Esophagus squamous epithelium (tissue), 5 donors: ENCODE measurements at regions of chr6 and their contacts with region 1.

Region 1: GRCh38 chr6:119360262-119360915 is 10.8 kb upstream of the MAN1A1 start:
- DNase-seq: no peak
- H3K4me3 ChIP-seq: no peak overlapping the region
- H3K27ac ChIP-seq: no peak overlapping the region
- H3K4me1 ChIP-seq: no peaks in the 10 kb centered on the region
- H3K27me3 ChIP-seq: no peaks in the 10 kb centered on the region
- CTCF ChIP-seq: no peak
- POLR2A ChIP-seq: no peak

Region 2: DNA sequence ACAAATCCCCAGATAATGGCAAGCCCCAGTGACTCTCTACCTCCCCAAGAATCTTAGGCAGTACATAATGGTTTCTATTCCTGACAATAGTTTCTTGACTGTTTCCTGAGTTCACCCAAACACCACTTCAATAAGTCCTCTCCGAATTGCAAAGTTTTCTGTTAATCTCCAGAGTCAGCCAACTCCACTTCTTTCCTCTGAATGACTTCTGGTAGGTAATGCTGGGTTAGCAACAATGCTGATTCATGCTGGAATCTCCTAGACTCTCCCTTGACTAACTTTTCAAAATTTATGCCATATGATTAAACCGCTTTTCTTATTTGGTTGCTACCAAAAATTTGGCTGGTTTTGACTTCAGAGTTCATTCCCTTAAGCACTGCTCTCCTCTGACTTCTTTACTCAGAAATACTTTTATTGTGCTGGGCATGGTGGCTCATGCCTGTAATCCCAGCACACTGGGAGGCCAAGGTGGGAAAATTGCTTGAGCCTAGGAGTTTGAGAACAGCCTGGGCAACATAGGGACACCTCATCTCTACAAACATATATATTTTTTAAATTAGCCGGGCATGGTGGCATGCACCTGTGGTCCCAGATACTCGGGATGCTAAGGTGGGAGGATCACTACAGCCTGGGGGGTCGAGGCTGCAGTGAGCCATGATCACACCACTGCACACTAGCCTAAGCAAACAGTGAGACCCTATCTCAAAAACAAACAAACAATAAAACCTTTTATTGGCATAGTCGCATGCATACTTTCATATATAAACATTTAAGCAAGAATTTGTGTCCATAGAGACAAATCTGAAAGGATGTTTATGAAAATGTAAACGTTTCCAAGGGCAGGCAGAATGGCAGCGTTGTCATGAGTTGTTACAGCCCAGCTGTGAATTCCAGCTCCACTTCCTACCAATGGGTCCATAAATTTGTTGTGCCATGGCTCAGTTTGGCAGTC is 1061.6 kb before region 1 on chr6:
- intact Hi-C with region 1: no loop called
- DNase-seq: no peak
- H3K4me3 ChIP-seq: no peak overlapping the region
- H3K27ac ChIP-seq: no peak overlapping the region
- H3K4me1 ChIP-seq: no peaks in the 10 kb centered on the region
- H3K27me3 ChIP-seq: no peaks in the 10 kb centered on the region
- CTCF ChIP-seq: no peak
- POLR2A ChIP-seq: no peak

Region 3: GRCh38 chr6:118697554-118697953 is 662.8 kb before region 1 on chr6:
- intact Hi-C with region 1: no loop called
- DNase-seq: no peak
- H3K4me3 ChIP-seq: no peak overlapping the region
- H3K27ac ChIP-seq: no peak overlapping the region
- H3K4me1 ChIP-seq: no peaks in the 10 kb centered on the region
- H3K27me3 ChIP-seq: no peaks in the 10 kb centered on the region
- CTCF ChIP-seq: no peak
- POLR2A ChIP-seq: no peak

Region 4: GRCh38 chr6:119647309-119647708 is 286.9 kb after region 1 on chr6:
- intact Hi-C with region 1: loop called (anchors 10 kb)
- DNase-seq: no peak
- H3K4me3 ChIP-seq: no peak overlapping the region
- H3K27ac ChIP-seq: no peak overlapping the region
- H3K4me1 ChIP-seq: no peaks in the 10 kb centered on the region
- H3K27me3 ChIP-seq: no peaks in the 10 kb centered on the region
- CTCF ChIP-seq: no peak
- POLR2A ChIP-seq: no peak